Spleen (tissue), 13 donors: ENCODE measurements at regions of chr2 and their contacts with region 1.

Region 1: DNA sequence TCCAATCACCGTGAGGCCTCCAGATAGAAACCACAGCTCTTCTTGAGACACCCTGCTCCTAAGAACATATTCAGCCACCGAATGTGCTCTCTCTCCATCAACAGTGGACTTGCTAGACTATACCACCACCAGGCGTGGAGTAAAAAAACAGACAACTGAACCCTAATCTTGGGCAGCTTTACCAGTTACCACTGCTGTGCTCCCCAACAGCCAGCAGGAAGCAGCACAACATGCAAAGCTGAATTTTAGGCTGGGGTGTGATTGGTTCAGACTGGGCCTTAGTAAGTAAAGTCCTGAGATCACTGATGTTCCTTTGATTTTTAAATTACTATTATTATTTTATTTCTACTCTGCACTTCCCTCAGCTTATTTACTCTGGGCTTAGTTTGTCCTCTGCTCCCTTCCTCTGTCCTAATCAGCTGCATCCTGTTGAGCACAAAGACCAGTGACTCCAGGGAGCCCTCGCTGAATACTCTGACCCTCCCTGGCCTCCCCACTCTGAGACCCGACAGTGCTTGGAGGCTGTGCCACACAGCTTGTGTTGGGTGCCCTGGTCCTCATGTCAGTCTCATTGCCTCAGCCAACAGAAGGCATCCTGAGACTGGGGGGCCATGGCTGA is 21.9 kb downstream of the MRPL35 start:
- DNase-seq: no peak
- H3K4me3 ChIP-seq: no peak overlapping the region
- H3K27ac ChIP-seq: no peak overlapping the region
- H3K4me1 ChIP-seq: peaks cover 0 to 32% (median 14%) of the 10 kb centered on the region in 6 donors
- H3K27me3 ChIP-seq: no peaks in the 10 kb centered on the region
- CTCF ChIP-seq: peak; percentile 61 to 90 (median 83)
- POLR2A ChIP-seq: no peak

Region 2: DNA sequence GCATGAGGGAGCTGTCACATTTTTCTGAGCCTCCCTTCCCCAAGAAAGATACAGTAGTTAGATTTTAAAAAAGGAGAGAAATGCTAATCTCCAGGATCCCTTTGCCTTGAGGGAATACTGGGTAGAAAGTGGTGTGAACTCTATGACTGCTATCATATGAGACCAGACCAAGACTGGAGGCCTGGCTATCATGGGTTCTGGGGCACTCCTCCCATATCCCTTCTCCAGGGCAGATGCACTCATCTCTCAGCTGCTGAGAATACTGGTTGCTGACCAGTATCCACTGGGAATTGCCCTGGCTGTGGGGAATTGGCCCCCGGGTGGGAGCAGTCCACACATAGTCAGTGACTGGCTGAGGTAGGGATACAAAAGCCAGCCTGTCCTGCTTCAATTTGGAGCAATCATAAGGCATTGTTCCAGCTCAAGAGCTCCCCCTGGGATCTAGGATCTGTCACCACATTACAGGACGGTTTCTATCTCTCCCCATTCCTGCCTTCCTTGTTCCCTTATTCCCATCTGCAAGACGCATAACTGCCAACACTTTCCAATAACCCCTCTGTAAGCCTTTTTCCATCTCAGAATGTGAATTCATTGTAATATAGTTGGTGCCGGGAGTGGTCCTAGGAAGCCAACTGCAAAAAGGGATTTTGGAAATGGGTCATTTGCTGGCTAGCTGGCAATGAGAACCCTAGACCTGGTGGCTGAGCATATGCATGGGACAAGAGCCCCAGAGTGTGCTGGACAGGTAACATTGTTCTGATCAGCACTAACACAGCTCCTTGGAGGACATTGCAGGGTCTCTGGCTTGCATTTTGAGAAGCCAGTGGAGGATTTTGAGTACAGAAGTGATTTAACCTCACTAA is 151.7 kb after region 1 on chr2:
- intact Hi-C with region 1: loop called (anchors 5 kb)
- DNase-seq: no peak
- H3K4me3 ChIP-seq: no peak overlapping the region
- H3K27ac ChIP-seq: no peak overlapping the region
- H3K4me1 ChIP-seq: peaks cover 0 to 29% (median 23%) of the 10 kb centered on the region in 6 donors
- H3K27me3 ChIP-seq: no peaks in the 10 kb centered on the region
- CTCF ChIP-seq: peak in 7 of 11 experiments; percentile 37 to 47 (median 43)
- POLR2A ChIP-seq: no peak